CD4-positive, alpha-beta T cell (primary cell): ENCODE measurements at regions of chr3 and their contacts with region 1.

Region 1: DNA sequence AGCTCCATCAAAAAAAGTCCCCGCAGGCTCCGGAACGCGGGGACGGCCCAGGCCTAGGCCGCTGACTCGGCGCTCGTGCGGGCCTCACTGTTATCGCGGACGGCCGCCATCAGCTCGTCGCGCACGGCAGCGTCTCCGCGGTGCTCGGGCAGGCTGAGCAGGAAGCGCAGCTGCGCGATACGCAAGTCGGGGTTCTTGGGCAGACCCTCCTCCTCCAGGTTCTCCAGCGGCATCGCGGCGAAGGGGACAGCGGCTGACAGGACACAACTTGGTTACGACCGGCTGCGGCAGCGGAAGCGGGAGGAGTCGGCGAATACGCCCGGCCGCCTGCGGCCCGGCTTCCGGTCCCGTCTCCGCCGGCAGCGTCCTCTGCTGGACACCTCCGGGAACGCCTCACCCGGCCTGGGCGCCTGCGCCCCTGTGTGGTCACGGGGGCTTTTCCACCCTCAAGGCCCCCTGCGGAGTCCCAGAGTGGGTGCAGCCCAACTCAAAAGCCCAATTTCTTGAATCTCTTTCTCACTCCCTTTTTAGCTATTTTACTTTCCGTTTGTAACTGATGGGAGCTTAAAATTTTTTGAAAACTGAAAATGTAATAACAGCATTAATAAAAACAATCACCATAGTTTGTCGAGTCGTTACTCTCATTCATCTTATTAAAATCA is at the start of gene PSMD6:
- DNase-seq: peak; percentile 85 to 95 (median 91)
- ATAC-seq: peak; percentile 91
- H3K4me3 ChIP-seq: peak within 1 kb of the TSS; percentile 83
- H3K4me3 Mint-ChIP-seq: peak within 1 kb of the TSS; percentile 92
- H3K27ac ChIP-seq: peak within 1 kb of the TSS; percentile 81
- H3K27ac Mint-ChIP-seq: peak within 1 kb of the TSS; percentile 81
- H3K4me1 ChIP-seq: peaks cover 25% of the 10 kb centered on the region
- H3K4me1 Mint-ChIP-seq: peaks cover 38% of the 10 kb centered on the region
- H3K27me3 ChIP-seq: peaks cover under 1 to 7% of the 10 kb centered on the region in 2 experiments
- H3K27me3 Mint-ChIP-seq: peaks cover 14% of the 10 kb centered on the region
- CTCF ChIP-seq: peak; percentile 100
- total RNA-seq, gene PSMD6: 119 to 126 TPM

Region 2: DNA sequence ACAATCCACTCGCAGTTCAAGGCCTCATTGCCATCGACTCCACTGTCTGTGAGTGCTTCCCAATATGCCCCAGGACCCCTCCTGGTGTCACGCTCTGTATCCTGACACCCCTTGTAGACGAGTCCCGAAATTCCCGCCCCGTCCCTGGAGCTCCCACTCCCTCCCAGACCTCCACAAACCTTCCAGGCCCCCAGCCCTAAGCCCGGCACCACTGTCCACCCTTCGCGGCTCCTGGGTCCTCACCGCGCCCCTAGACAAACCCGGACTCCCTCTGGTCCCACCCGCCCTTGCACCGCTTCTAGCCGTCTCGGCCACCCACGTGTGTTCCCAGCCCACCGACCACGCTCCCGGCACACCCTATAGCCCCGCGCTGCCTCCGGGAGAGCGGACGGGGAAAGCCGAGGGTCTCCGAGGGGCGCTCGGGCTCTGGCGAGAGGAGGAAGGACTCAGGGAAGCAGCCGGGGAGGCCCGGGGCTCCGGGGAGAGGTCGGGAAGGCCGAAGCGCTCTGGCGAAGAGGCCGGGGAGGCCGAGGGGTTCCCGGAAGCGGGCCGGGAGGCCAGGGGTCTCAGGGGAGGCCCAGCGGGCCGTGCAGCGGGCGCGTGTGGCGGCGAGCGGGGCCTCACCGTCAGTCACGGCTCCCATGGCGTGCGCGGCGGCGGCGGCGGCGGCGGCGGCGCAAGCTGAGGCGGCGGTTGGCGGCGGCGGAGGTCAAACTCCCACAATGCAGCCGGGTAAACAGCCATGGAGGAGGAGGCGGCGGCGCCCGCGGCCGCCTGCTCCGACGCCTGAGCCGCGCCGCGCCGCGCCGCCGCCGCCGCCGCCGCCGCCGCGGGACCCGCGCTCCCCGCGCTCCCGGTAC is 159.9 kb before region 1 on chr3 and contains the starts of genes ATXN7 and THOC7:
- CTCF ChIA-PET with region 1: interaction called, 3 read pairs
- POLR2A ChIA-PET with region 1: interaction called, 8 read pairs
- intact Hi-C with region 1: loop called (anchors 2 to 5 kb)
- DNase-seq: peak; percentile 55 to 89 (median 68)
- ATAC-seq: peak; percentile 84
- H3K4me3 ChIP-seq: peak within 1 kb of the TSS; percentile 85
- H3K4me3 Mint-ChIP-seq: peak within 1 kb of the TSS; percentile 89
- H3K27ac ChIP-seq: peak within 1 kb of the TSS in 1 of 2 donors; percentile 50
- H3K27ac Mint-ChIP-seq: peak within 1 kb of the TSS; percentile 86
- H3K4me1 ChIP-seq: peaks cover 34% of the 10 kb centered on the region
- H3K4me1 Mint-ChIP-seq: peaks cover 73% of the 10 kb centered on the region
- H3K27me3 ChIP-seq: no peaks in the 10 kb centered on the region
- H3K27me3 Mint-ChIP-seq: no peaks in the 10 kb centered on the region
- CTCF ChIP-seq: no peak
- total RNA-seq, gene ATXN7: 289 to 304 TPM
- total RNA-seq, gene THOC7: 21.6 to 23.7 TPM

Region 3: DNA sequence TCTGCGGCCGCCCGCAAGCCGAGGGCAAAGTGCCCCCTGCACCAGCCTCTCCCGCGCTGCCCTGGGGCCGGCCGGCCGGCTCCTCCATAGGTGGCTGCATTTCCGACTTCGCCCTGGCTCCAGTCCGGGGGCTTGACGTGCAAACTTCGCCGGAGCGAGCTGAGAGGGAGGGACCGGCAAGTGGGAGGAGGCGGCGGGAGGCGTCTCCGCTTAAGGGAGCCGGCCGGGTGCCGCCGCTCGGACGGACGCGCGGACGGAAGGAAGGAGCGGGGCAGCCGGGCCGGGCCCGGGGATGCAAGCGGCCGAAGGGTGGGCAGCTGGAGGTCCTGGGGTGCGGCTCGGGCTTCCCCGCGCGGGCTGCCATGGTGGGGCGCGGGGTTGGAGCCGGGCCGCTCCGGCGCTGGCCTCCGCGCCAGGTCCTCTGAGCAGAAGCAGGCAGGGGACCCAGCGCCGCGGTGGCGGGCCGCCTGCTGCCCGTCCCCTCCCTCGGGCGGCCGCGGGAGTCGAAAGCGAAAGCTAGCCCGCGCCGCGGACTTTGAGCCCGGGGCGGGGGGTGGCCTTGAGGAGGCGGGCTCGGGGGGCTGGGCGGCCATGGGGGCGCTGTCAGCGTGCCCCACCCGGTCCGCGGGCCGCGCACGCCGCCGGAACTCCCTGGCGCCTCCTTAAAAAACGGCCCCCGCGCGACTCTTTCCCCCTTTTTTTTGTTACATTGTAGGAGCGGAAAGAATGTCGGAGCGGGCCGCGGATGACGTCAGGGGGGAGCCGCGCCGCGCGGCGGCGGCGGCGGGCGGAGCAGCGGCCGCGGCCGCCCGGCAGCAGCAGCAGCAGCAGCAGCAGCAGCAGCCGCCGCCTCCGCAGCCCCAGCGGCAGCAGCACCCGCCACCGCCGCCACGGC is 111.2 kb before region 1 on chr3 and contains the start of gene SCAANT1:
- CTCF ChIA-PET with region 1: no interaction called
- POLR2A ChIA-PET with region 1: interaction called, 4 read pairs
- intact Hi-C with region 1: loop called (anchors 2 to 5 kb)
- DNase-seq: peak; percentile 63 to 93 (median 77)
- ATAC-seq: peak; percentile 64
- H3K4me3 ChIP-seq: peak within 1 kb of the TSS; percentile 64
- H3K4me3 Mint-ChIP-seq: peak within 1 kb of the TSS; percentile 93
- H3K27ac ChIP-seq: peak within 1 kb of the TSS; percentile 70 to 83
- H3K27ac Mint-ChIP-seq: peak within 1 kb of the TSS; percentile 94
- H3K4me1 ChIP-seq: peaks cover 24% of the 10 kb centered on the region
- H3K4me1 Mint-ChIP-seq: peaks cover 44% of the 10 kb centered on the region
- H3K27me3 ChIP-seq: no peaks in the 10 kb centered on the region
- H3K27me3 Mint-ChIP-seq: no peaks in the 10 kb centered on the region
- CTCF ChIP-seq: no peak
- total RNA-seq, gene SCAANT1: 1.4 to 2.1 TPM

Region 4: GRCh38 chr3:63961891-63962290 is 61.4 kb before region 1 on chr3:
- CTCF ChIA-PET with region 1: interaction called, 5 read pairs
- POLR2A ChIA-PET with region 1: interaction called, 33 read pairs
- intact Hi-C with region 1: loop called in 1 of 2 experiments (anchors 2 kb)
- DNase-seq: peak in 4 of 14 experiments; percentile 26 to 78 (median 77)
- ATAC-seq: peak; percentile 99
- H3K4me3 ChIP-seq: no peak overlapping the region
- H3K4me3 Mint-ChIP-seq: no peak overlapping the region
- H3K27ac ChIP-seq: no peak overlapping the region
- H3K27ac Mint-ChIP-seq: peak overlapping the region; percentile 63
- H3K4me1 ChIP-seq: peaks cover 14% of the 10 kb centered on the region
- H3K4me1 Mint-ChIP-seq: peaks cover 47% of the 10 kb centered on the region
- H3K27me3 ChIP-seq: no peaks in the 10 kb centered on the region
- H3K27me3 Mint-ChIP-seq: no peaks in the 10 kb centered on the region
- CTCF ChIP-seq: peak; percentile 93

Region 5: DNA sequence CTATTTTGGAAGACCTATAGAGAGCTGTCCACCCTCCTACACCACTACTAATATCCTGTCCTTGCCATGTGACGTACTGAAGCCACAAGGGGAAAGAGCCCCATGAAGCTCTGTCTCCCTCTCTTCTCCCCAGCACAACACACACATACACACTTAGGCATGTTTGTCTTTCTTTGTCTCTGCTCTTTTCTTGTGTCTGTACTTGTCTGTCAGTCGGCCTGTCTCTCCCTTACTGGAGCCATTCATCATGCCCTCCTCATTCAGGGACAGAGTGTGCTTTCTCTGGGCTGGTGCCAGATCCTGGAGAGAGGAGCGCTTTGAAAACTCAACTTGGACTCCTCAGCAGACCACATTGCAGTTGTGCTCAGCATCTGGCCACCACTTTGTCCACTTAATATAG is 47.6 kb before region 1 on chr3:
- CTCF ChIA-PET with region 1: interaction called, 7 read pairs
- POLR2A ChIA-PET with region 1: interaction called, 15 read pairs
- intact Hi-C with region 1: no loop called
- DNase-seq: no peak
- ATAC-seq: no peak
- H3K4me3 ChIP-seq: no peak overlapping the region
- H3K4me3 Mint-ChIP-seq: peak overlapping the region; percentile 54
- H3K27ac ChIP-seq: no peak overlapping the region
- H3K27ac Mint-ChIP-seq: peak overlapping the region; percentile 94
- H3K4me1 ChIP-seq: peaks cover 69% of the 10 kb centered on the region
- H3K4me1 Mint-ChIP-seq: peaks cover 97% of the 10 kb centered on the region
- H3K27me3 ChIP-seq: no peaks in the 10 kb centered on the region
- H3K27me3 Mint-ChIP-seq: no peaks in the 10 kb centered on the region
- CTCF ChIP-seq: no peak

Region 6: GRCh38 chr3:64008017-64008971 is 15.0 kb before region 1 on chr3:
- CTCF ChIA-PET with region 1: interaction called, 11 read pairs
- POLR2A ChIA-PET with region 1: interaction called, 13 read pairs
- intact Hi-C with region 1: loop called in 1 of 2 experiments (anchors 2 kb)
- DNase-seq: no peak
- ATAC-seq: no peak
- H3K4me3 ChIP-seq: no peak overlapping the region
- H3K4me3 Mint-ChIP-seq: no peak overlapping the region
- H3K27ac ChIP-seq: no peak overlapping the region
- H3K27ac Mint-ChIP-seq: peak overlapping the region; percentile 18
- H3K4me1 ChIP-seq: no peaks in the 10 kb centered on the region
- H3K4me1 Mint-ChIP-seq: peaks cover 27% of the 10 kb centered on the region
- H3K27me3 ChIP-seq: no peaks in the 10 kb centered on the region
- H3K27me3 Mint-ChIP-seq: no peaks in the 10 kb centered on the region
- CTCF ChIP-seq: no peak